ENCODE measurements at regions of chrX and their contacts with region 1.

Region 1: DNA sequence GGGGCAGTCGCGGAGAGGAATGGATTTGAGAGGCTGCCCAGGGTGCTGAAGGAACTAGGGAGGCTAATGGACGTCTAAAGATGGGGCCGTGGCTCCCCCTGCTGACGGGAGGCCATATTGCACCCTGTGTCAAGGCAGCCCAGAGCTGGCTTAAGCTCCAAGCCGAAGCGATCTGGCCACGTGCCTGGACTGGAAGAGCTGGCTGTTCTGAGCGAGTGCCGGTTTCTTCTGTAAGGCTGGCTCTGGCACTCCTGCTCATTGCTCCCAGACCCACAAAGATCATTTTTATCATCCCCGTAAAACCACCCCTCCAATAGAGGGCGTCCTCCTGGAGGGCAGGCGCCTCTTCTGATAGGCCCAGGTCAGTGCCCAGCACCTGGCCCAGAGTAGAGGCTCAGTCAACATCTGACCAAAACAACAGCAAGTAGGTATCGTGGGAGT is 5.6 kb downstream of the PNCK start:
- DNase-seq: peak; percentile 81
- ATAC-seq: peak; percentile 81
- H3K4me3 Mint-ChIP-seq: peak overlapping the region; percentile 54
- H3K27ac Mint-ChIP-seq: no peak overlapping the region
- H3K4me1 Mint-ChIP-seq: peaks cover 5% of the 10 kb centered on the region
- H3K27me3 Mint-ChIP-seq: peaks cover 10% of the 10 kb centered on the region

Region 2: DNA sequence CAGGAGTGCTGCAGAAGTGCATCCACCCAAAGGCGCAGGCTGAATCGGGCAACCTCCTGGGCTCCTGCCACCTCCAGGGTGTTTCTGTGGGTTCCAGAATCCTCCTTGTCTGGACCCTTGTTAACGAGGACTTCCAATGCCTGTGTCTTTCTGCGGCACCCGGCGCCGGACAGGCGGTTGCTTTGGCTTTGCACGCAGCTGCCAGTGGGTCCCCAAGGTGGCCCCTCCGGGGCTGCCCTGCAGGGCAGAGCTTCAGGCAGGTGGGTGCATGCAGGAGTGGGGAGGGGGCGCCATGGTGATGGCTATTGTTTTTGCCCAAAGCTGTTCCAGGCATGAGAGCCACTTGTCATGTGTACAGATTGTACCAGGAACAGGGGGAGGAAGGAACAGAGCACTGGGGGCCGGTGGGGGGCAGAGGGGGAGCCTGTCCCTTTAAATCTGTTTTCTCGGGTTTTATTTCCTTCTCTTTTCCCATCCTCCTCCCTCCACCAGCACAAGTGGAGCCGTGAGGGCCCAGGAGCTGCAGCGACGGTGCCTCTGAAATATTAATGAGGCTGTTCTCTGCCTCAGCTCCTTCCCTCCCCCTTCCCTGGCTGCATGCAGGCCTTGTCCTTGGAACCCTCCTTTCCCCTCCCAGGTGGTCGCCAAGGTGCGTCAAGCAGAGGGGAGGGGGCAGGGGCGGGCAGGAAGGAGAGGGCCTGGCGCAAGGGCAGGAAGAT is 137.4 kb before region 1 on chrX:
- CTCF ChIA-PET with region 1: no interaction called
- DNase-seq: no peak
- ATAC-seq: no peak
- H3K4me3 Mint-ChIP-seq: no peak overlapping the region
- H3K27ac Mint-ChIP-seq: no peak overlapping the region
- H3K4me1 Mint-ChIP-seq: no peaks in the 10 kb centered on the region
- H3K27me3 Mint-ChIP-seq: no peaks in the 10 kb centered on the region

Region 3: DNA sequence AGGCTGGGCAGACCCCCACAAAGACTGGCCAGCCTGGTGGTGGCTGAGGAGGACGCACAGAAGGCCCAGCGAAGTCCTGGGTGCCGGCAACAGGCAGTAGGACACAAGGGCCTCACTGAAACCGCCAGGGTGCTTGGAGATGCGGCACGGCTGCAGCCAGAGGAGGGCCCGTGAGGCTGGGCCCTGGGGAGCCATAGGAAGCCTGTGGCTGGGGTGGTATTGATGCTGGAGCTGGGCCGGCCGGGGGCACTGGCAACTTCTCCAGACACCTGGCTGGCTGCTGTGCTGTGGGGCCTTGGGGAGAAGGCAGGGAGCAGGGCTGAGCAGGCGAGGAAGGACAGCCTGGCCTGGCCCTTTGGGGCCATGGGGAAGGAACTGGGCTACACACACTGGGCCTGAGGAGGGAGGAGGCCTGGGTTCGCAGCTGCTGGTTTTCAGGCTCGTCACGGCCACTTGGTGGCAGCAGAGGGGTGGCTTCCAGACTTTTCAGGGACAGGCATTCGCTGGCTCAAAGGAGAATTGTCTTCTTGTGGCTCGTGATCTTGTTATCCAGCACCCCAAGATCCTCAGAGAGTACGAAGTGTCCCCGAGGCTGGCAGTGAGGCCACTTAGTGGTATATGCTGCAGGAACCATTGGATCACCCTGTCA is 113.3 kb before region 1 on chrX:
- CTCF ChIA-PET with region 1: interaction called, 40 read pairs
- DNase-seq: peak; percentile 63
- ATAC-seq: peak; percentile 81
- H3K4me3 Mint-ChIP-seq: no peak overlapping the region
- H3K27ac Mint-ChIP-seq: no peak overlapping the region
- H3K4me1 Mint-ChIP-seq: no peaks in the 10 kb centered on the region
- H3K27me3 Mint-ChIP-seq: no peaks in the 10 kb centered on the region

Region 4: GRCh38 chrX:153590961-153591956 is 76.7 kb before region 1 on chrX:
- CTCF ChIA-PET with region 1: no interaction called
- DNase-seq: no peak
- ATAC-seq: no peak
- H3K4me3 Mint-ChIP-seq: no peak overlapping the region
- H3K27ac Mint-ChIP-seq: no peak overlapping the region
- H3K4me1 Mint-ChIP-seq: no peaks in the 10 kb centered on the region
- H3K27me3 Mint-ChIP-seq: no peaks in the 10 kb centered on the region

Region 5: DNA sequence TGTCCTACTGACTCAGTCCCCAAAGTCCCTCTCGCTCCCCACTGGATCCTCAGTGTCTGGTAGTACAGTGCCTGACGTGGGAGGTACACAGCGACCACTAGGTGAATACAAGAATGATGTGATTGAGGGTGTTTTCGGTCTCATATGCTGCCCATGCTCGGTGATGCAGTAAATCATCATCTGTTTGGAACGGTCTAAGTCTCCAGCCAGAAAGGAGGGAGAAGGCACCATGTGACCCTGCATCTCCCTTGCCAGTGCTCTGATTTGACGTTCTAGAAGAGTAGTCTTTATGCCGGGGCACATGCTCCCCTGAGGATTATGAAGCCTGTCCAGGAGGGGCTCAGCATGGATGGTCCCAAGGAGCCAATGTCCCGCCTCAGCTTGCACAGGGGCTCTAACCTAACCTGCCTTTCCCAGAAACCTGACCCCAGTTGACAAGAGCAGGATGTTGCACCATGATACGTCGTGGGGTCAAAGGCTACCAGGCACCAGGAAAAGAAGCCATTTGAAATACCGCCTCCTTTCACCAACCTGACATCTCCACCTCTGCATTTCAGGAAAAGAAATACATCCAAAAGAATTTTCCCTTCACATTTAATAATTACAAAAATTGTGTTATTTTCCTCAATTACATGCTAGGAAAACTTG is 82.3 kb after region 1 on chrX:
- CTCF ChIA-PET with region 1: no interaction called
- DNase-seq: no peak
- ATAC-seq: no peak
- H3K4me3 Mint-ChIP-seq: no peak overlapping the region
- H3K27ac Mint-ChIP-seq: no peak overlapping the region
- H3K4me1 Mint-ChIP-seq: no peaks in the 10 kb centered on the region
- H3K27me3 Mint-ChIP-seq: peaks cover 16% of the 10 kb centered on the region

Region 6: DNA sequence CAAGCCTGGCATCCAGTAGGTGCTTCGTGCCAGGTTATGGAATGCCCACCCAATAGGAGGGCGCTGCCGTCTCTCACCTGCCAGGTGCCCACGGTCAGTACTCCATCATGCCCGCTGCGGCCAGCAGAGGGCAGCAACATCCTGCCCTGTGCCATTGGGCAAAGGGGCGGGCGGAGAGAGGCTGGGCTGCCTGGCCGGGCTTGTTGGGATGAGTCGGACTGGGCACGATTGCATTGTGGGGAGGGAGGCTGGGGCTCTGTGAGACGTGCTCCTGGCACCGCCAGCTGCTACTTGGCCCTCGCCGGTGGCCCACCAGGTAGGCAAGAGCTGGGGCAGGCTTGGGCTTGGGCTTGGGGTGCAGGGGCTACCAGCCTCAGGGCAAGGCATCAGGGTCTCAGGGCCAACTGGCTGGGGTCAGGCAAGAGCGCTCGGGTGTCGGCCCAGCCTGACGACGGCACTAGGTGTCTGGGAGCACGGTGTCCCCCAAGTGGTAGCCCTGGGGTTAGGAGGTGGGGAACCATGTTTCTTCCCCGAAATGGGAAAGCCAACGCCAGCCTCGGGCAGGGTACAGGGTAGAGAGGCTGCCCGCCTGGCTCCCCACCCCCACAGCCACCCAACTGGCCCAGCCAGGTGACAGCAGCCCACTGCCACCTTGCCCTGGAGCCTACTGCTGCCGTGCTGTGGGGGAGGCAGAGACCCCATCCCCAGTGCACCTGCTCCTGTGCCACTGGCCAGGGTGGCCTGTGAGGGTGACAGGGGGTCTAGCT is 96.2 kb after region 1 on chrX and contains the start of gene PLXNB3:
- CTCF ChIA-PET with region 1: no interaction called
- DNase-seq: peak; percentile 77
- ATAC-seq: peak; percentile 91
- H3K4me3 Mint-ChIP-seq: no peak within 1 kb of the TSS
- H3K27ac Mint-ChIP-seq: no peak within 1 kb of the TSS
- H3K4me1 Mint-ChIP-seq: peaks cover 5% of the 10 kb centered on the region
- H3K27me3 Mint-ChIP-seq: no peaks in the 10 kb centered on the region
- total RNA-seq, gene PLXNB3: 0.42 to 0.50 TPM

Measured in activated CD8-positive, alpha-beta memory T cell treated with anti-CD3 and anti-CD28 coated beads, Interleukin-2, amount 10 ng/mL, durations not matched to agents 7 days and 5 days (primary cell).